CD4-positive, alpha-beta T cell (primary cell): ENCODE measurements at regions of chr13 and their contacts with region 1.

Region 1: GRCh38 chr13:30371649-30372265 is 50.5 kb upstream of the UBE2L5 start:
- DNase-seq: peak; percentile 47 to 91 (median 60)
- ATAC-seq: peak; percentile 64
- H3K4me3 ChIP-seq: peak overlapping the region; percentile 30
- H3K4me3 Mint-ChIP-seq: peak overlapping the region; percentile 21
- H3K27ac ChIP-seq: peak overlapping the region; percentile 62 to 74
- H3K27ac Mint-ChIP-seq: peak overlapping the region; percentile 93
- H3K4me1 ChIP-seq: peaks cover 93% of the 10 kb centered on the region
- H3K4me1 Mint-ChIP-seq: peaks cover 82% of the 10 kb centered on the region
- H3K27me3 ChIP-seq: no peaks in the 10 kb centered on the region
- H3K27me3 Mint-ChIP-seq: no peaks in the 10 kb centered on the region
- CTCF ChIP-seq: no peak

Region 2: GRCh38 chr13:29937841-29938240 is 433.9 kb before region 1 on chr13:
- CTCF ChIA-PET with region 1: no interaction called
- POLR2A ChIA-PET with region 1: no interaction called
- intact Hi-C with region 1: no loop called
- DNase-seq: peak in 13 of 14 experiments; percentile 21 to 78 (median 51)
- ATAC-seq: peak; percentile 27
- H3K4me3 ChIP-seq: peak overlapping the region; percentile 64
- H3K4me3 Mint-ChIP-seq: peak overlapping the region; percentile 90
- H3K27ac ChIP-seq: peak overlapping the region; percentile 34 to 82
- H3K27ac Mint-ChIP-seq: peak overlapping the region; percentile 93
- H3K4me1 ChIP-seq: peaks cover 65% of the 10 kb centered on the region
- H3K4me1 Mint-ChIP-seq: peaks cover 83% of the 10 kb centered on the region
- H3K27me3 ChIP-seq: no peaks in the 10 kb centered on the region
- H3K27me3 Mint-ChIP-seq: no peaks in the 10 kb centered on the region
- CTCF ChIP-seq: peak; percentile 47

Region 3: GRCh38 chr13:30071969-30072817 is 299.6 kb before region 1 on chr13:
- CTCF ChIA-PET with region 1: no interaction called
- POLR2A ChIA-PET with region 1: no interaction called
- intact Hi-C with region 1: no loop called
- DNase-seq: no peak
- ATAC-seq: no peak
- H3K4me3 ChIP-seq: no peak overlapping the region
- H3K4me3 Mint-ChIP-seq: no peak overlapping the region
- H3K27ac ChIP-seq: no peak overlapping the region
- H3K27ac Mint-ChIP-seq: no peak overlapping the region
- H3K4me1 ChIP-seq: no peaks in the 10 kb centered on the region
- H3K4me1 Mint-ChIP-seq: no peaks in the 10 kb centered on the region
- H3K27me3 ChIP-seq: no peaks in the 10 kb centered on the region
- H3K27me3 Mint-ChIP-seq: no peaks in the 10 kb centered on the region
- CTCF ChIP-seq: no peak

Region 4: DNA sequence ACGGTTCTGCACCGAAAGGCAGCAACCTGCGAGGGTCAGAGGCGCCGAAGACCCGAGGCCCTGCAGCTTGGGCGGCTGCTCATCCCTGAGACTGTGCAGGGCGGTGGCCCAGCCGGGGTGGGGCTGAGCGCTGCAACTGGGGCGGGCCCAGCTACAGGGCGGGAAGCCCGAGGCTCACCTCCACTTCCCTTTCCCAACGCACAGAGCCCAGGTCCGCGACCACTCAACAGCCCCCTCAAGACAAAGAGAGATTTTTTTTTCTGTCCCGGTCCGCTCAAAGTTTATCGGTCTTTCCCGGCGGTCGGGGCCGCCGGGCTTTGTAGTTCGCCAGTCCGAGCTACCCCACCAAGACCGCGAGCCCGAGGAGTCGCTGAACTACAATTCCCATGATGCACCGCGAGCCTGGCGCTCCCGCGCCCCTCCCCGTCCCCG is 65.0 kb before region 1 on chr13:
- CTCF ChIA-PET with region 1: interaction called, 6 read pairs
- POLR2A ChIA-PET with region 1: interaction called, 11 read pairs
- intact Hi-C with region 1: loop called in 1 of 2 experiments (anchors 2 kb)
- DNase-seq: peak; percentile 81 to 94 (median 88)
- ATAC-seq: peak; percentile 85
- H3K4me3 ChIP-seq: peak overlapping the region; percentile 86
- H3K4me3 Mint-ChIP-seq: peak overlapping the region; percentile 92
- H3K27ac ChIP-seq: peak overlapping the region; percentile 41 to 47
- H3K27ac Mint-ChIP-seq: peak overlapping the region; percentile 68
- H3K4me1 ChIP-seq: peaks cover 12% of the 10 kb centered on the region
- H3K4me1 Mint-ChIP-seq: peaks cover 12% of the 10 kb centered on the region
- H3K27me3 ChIP-seq: no peaks in the 10 kb centered on the region
- H3K27me3 Mint-ChIP-seq: no peaks in the 10 kb centered on the region
- CTCF ChIP-seq: no peak

Region 5: GRCh38 chr13:30382836-30383525 is 11.2 kb after region 1 on chr13:
- CTCF ChIA-PET with region 1: interaction called, 17 read pairs
- POLR2A ChIA-PET with region 1: interaction called, 254 read pairs
- intact Hi-C with region 1: no loop called
- DNase-seq: peak in 3 of 14 experiments; percentile 25 to 48 (median 34)
- ATAC-seq: peak; percentile 54
- H3K4me3 ChIP-seq: no peak overlapping the region
- H3K4me3 Mint-ChIP-seq: peak overlapping the region; percentile 9
- H3K27ac ChIP-seq: no peak overlapping the region
- H3K27ac Mint-ChIP-seq: peak overlapping the region; percentile 6
- H3K4me1 ChIP-seq: peaks cover 22% of the 10 kb centered on the region
- H3K4me1 Mint-ChIP-seq: peaks cover 56% of the 10 kb centered on the region
- H3K27me3 ChIP-seq: no peaks in the 10 kb centered on the region
- H3K27me3 Mint-ChIP-seq: no peaks in the 10 kb centered on the region
- CTCF ChIP-seq: no peak

Region 6: DNA sequence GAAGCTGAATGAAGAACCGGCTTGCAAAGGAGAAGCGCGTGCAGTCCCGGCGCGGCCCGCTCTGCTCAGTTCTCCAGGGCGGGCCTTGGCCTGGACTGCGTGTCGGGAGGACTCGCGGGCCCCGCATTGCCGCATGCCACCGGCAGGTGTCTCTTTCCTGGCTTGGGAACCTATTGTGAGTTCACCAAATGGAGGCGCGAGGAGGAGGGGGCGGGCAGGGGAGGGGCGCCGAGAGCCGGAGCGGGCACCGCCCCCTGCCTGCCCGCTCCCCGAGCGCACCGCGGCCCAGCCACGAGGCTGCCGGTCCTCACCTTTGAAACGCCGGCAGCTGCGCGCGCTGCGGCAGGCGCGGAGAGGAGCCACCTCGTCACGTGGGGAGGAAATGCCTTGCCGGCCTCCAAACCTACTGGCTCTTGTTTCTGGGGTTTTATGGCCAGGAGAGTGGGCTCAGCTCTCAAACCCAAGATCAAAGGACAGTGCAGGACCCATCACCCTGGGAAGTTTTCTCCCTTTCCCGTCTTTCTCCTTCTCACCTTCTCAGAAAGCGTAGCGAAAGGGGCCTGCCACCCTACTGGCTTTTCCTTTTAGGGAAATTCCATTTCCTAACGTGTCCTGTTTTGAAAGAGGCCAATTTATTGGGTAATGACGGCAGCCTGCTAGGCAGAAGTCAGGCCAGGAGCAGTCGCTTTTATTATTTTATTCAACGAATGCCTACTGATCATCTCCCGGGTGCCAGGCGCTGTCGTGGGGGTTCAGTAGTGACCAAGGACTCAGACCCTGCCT is 36.8 kb after region 1 on chr13:
- CTCF ChIA-PET with region 1: interaction called, 13 read pairs
- POLR2A ChIA-PET with region 1: interaction called, 11 read pairs
- intact Hi-C with region 1: no loop called
- DNase-seq: peak; percentile 83 to 96 (median 88)
- ATAC-seq: peak; percentile 91
- H3K4me3 ChIP-seq: peak overlapping the region; percentile 37
- H3K4me3 Mint-ChIP-seq: peak overlapping the region; percentile 76
- H3K27ac ChIP-seq: peak overlapping the region in 1 of 2 donors; percentile 76
- H3K27ac Mint-ChIP-seq: peak overlapping the region; percentile 78
- H3K4me1 ChIP-seq: peaks cover 20% of the 10 kb centered on the region
- H3K4me1 Mint-ChIP-seq: peaks cover 40% of the 10 kb centered on the region
- H3K27me3 ChIP-seq: no peaks in the 10 kb centered on the region
- H3K27me3 Mint-ChIP-seq: no peaks in the 10 kb centered on the region
- CTCF ChIP-seq: peak; percentile 63

Region 7: GRCh38 chr13:30465585-30466357 is 94.0 kb after region 1 on chr13 and contains the start of gene HMGB1:
- CTCF ChIA-PET with region 1: interaction called, 12 read pairs
- POLR2A ChIA-PET with region 1: interaction called, 42 read pairs
- intact Hi-C with region 1: loop called in 1 of 2 experiments (anchors 1 kb)
- DNase-seq: peak; percentile 92 to 98 (median 94)
- ATAC-seq: peak; percentile 86
- H3K4me3 ChIP-seq: peak within 1 kb of the TSS; percentile 69
- H3K4me3 Mint-ChIP-seq: peak within 1 kb of the TSS; percentile 95
- H3K27ac ChIP-seq: peak within 1 kb of the TSS in 1 of 2 donors; percentile 96
- H3K27ac Mint-ChIP-seq: peak within 1 kb of the TSS; percentile 98
- H3K4me1 ChIP-seq: peaks cover 11% of the 10 kb centered on the region
- H3K4me1 Mint-ChIP-seq: peaks cover 37% of the 10 kb centered on the region
- H3K27me3 ChIP-seq: no peaks in the 10 kb centered on the region
- H3K27me3 Mint-ChIP-seq: peaks cover 6% of the 10 kb centered on the region
- CTCF ChIP-seq: no peak
- total RNA-seq, gene HMGB1: 448 to 465 TPM